Heart left ventricle (tissue), 16 donors: ENCODE measurements at regions of chr12 and their contacts with region 1.

Region 1: GRCh38 chr12:45762185-45763110 is 32.9 kb downstream of the ARID2 start:
- DNase-seq: no peak
- ATAC-seq: peak in 3 of 4 donors; percentile 50 to 67 (median 56)
- H3K4me3 ChIP-seq: no peak overlapping the region
- H3K27ac ChIP-seq: no peak overlapping the region
- H3K4me1 ChIP-seq: peaks cover 0 to 25% (median 7%) of the 10 kb centered on the region in 12 donors
- H3K27me3 ChIP-seq: no peaks in the 10 kb centered on the region
- CTCF ChIP-seq: peak; percentile 30 to 72 (median 60)
- POLR2A ChIP-seq: no peak

Region 2: DNA sequence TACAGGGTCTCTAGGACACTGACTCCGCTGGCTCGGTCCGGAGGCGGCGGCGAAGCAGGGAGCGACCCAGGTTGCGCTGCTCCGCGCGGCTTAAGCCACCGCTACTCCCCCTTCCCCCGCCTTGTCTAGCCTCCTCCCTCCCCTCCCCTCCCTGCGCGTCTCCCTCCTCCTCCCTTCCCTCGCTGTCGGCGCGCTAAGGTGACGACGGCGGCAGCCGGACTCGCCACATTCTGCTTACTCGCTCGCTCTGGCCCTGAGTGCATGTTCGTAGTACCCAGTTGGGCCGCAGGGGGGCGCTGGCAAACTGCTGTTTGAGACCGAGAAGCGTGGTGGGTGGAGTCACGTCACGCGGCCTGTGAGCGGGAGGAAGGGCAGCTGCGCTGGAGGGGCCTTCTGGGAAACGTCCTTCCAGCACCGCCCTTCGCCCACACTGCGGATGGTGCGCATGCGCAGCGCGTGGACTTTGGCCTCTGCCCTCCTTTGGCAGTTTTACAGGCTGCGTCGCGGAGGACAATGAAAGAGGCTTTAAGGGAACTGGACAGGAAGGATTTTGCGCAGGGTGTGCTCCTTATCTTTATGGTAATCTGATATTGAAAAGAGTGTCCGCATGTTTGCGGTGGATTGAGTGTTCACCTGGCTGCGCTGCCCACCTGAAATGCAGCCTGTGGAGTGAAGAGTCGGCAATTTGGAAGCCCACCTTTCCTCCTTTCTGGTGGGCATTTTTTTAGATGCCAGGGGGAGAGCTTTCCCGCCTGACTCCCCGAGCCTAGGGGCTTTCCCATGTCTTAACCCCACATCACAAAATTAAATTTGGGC is 228.2 kb after region 1 on chr12 and contains the start of gene SCAF11:
- intact Hi-C with region 1: loop called in 2 of 10 experiments (anchors 10 kb)
- DNase-seq: peak; percentile 100
- ATAC-seq: peak; percentile 90 to 96 (median 94)
- H3K4me3 ChIP-seq: peak within 1 kb of the TSS; percentile 73 to 98 (median 90)
- H3K27ac ChIP-seq: peak within 1 kb of the TSS; percentile 96 to 100 (median 99)
- H3K4me1 ChIP-seq: peaks cover 0 to 48% (median 35%) of the 10 kb centered on the region in 12 donors
- H3K27me3 ChIP-seq: no peaks in the 10 kb centered on the region
- CTCF ChIP-seq: peak; percentile 91 to 99 (median 94)
- POLR2A ChIP-seq: peak; percentile 66 to 75
- total RNA-seq, gene SCAF11: 71.3 to 148 (median 98.7) TPM

Region 3: GRCh38 chr12:46005151-46005797 is 242.8 kb after region 1 on chr12:
- intact Hi-C with region 1: loop called in 3 of 10 experiments (anchors 10 kb)
- DNase-seq: no peak
- ATAC-seq: no peak
- H3K4me3 ChIP-seq: no peak overlapping the region
- H3K27ac ChIP-seq: no peak overlapping the region
- H3K4me1 ChIP-seq: no peaks in the 10 kb centered on the region
- H3K27me3 ChIP-seq: no peaks in the 10 kb centered on the region
- CTCF ChIP-seq: peak in 11 of 12 donors; percentile 17 to 57 (median 42)
- POLR2A ChIP-seq: no peak